Heart right ventricle (tissue), 16 donors: ENCODE measurements at regions of chr6 and their contacts with region 1.

Region 1: GRCh38 chr6:43093436-43094289 is 17.5 kb downstream of the PTK7 start:
- DNase-seq: peak in 1 of 2 donors; percentile 21
- ATAC-seq: peak in 7 of 8 donors; percentile 60 to 86 (median 80)
- H3K4me3 ChIP-seq: peak overlapping the region in 7 of 10 donors; percentile 13 to 42 (median 37)
- H3K27ac ChIP-seq: peak overlapping the region in 3 of 10 donors; percentile 9 to 36 (median 9)
- H3K4me1 ChIP-seq: peaks cover 0 to 21% (median 4%) of the 10 kb centered on the region in 9 donors
- H3K27me3 ChIP-seq: no peaks in the 10 kb centered on the region
- CTCF ChIP-seq: no peak

Region 2: DNA sequence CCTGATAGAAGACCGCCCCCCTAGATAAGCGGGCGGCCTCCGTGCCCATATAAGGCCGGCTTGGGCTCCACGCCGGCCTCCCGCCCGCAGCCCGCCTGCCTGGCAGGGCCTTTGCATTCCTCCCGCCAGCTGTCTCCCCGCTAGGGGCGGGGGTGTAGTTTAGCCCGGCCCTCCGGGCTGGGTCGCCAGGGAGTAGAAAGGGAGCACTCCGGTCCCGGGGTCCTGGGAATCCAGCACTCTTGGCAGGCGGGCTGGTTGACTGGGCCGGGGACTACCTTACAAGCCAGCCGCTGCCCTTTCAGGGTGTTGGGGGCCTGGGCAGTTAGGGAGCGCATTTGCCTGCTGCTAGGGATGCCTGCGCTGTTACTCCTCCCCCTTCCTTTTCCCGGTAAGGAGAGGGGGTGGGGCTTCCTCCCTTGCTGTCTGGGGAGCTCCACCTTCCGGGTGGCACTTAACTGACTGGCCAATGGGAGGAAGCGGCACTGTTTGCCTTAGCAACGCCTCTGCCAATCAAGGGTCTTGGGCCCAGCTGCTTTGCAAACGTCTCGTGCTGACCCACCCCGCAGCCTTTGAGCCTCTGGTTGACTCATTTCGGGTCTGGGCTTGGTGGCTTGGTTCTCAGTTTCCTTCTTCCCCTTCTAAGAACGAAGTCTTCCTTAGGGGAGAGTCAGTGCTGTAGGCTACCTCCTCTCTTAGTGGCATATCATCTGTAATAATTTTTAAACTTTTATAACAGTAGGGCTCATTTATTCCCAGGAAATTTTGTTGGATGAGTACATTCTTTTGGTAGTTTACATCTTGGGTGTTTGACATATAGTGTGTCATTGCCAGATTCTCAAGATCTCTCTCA is 80.8 kb after region 1 on chr6:
- intact Hi-C with region 1: no loop called
- DNase-seq: peak; percentile 89 to 98
- ATAC-seq: peak; percentile 67 to 89 (median 83)
- H3K4me3 ChIP-seq: peak overlapping the region in 9 of 10 donors; percentile 37 to 99 (median 97)
- H3K27ac ChIP-seq: peak overlapping the region; percentile 85 to 99 (median 98)
- H3K4me1 ChIP-seq: peaks cover 19 to 51% (median 34%) of the 10 kb centered on the region in 9 donors
- H3K27me3 ChIP-seq: no peaks in the 10 kb centered on the region
- CTCF ChIP-seq: peak in 6 of 9 donors; percentile 16 to 49 (median 30)

Region 3: GRCh38 chr6:43355862-43356590 is 262.4 kb after region 1 on chr6:
- intact Hi-C with region 1: no loop called
- DNase-seq: peak in 1 of 2 donors; percentile 15
- ATAC-seq: peak in 7 of 8 donors; percentile 71 to 87 (median 79)
- H3K4me3 ChIP-seq: no peak overlapping the region
- H3K27ac ChIP-seq: peak overlapping the region in 1 of 10 donors; percentile 12
- H3K4me1 ChIP-seq: peaks cover 0 to 9% (median 0%) of the 10 kb centered on the region in 9 donors
- H3K27me3 ChIP-seq: no peaks in the 10 kb centered on the region
- CTCF ChIP-seq: peak; percentile 10 to 65 (median 47)

Region 4: GRCh38 chr6:43532201-43532600 is 438.5 kb after region 1 on chr6:
- intact Hi-C with region 1: loop called in 1 of 10 experiments (anchors 5 kb)
- DNase-seq: no peak
- ATAC-seq: no peak
- H3K4me3 ChIP-seq: no peak overlapping the region
- H3K27ac ChIP-seq: no peak overlapping the region
- H3K4me1 ChIP-seq: no peaks in the 10 kb centered on the region
- H3K27me3 ChIP-seq: no peaks in the 10 kb centered on the region
- CTCF ChIP-seq: no peak